ENCODE measurements at regions of chr2 and their contacts with region 1.

Region 1: GRCh38 chr2:12430407-12431133 is 286.2 kb upstream of the TRIB2 start:
- DNase-seq: no peak
- H3K4me3 ChIP-seq: no peak overlapping the region
- H3K27ac ChIP-seq: no peak overlapping the region
- H3K4me1 ChIP-seq: no peaks in the 10 kb centered on the region
- H3K27me3 ChIP-seq: no peaks in the 10 kb centered on the region
- CTCF ChIP-seq: no peak

Region 2: DNA sequence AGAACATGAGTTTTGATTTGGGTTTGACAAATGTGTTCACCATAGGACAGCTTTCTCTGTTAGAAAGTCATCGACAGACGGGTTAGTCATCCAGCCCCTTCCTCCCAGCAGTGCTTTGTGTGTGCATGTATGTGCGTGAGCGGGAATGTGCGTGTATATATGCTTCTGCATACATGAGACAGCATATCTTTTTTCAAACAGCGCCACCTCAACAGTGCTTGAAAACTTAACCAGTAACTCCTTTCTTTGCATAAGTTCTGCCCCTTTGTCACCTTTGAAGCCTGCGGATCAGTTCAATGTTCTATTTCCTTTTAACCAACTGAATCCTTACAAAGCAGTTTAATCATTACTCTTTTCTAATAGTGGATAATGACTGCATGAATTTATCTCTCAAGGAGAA is 332.7 kb before region 1 on chr2:
- CTCF ChIA-PET with region 1: no interaction called
- POLR2A ChIA-PET with region 1: no interaction called
- intact Hi-C with region 1: no loop called
- DNase-seq: no peak
- H3K4me3 ChIP-seq: no peak overlapping the region
- H3K27ac ChIP-seq: no peak overlapping the region
- H3K4me1 ChIP-seq: peaks cover 15% of the 10 kb centered on the region
- H3K27me3 ChIP-seq: no peaks in the 10 kb centered on the region
- CTCF ChIP-seq: no peak

Region 3: DNA sequence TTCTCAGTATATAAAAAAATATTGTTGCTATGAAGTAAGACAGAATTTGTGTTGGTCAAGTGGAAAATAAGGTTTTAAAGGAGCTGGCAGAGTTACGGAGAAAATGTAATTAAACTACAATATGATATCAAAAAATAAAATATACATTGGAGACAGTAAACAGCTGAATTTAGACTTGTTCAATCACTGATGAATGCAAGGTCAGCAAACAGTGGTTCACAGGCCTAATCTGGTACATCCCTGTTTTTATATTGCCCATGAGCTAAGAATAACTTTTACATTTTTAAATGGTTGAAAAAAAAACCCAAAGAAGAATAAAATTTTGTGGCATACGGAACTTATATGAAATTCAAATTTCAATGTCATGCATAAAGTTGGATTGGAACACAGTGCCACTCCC is 155.2 kb after region 1 on chr2:
- CTCF ChIA-PET with region 1: no interaction called
- POLR2A ChIA-PET with region 1: interaction called, 10 read pairs
- intact Hi-C with region 1: no loop called
- DNase-seq: no peak
- H3K4me3 ChIP-seq: no peak overlapping the region
- H3K27ac ChIP-seq: no peak overlapping the region
- H3K4me1 ChIP-seq: peaks cover 24% of the 10 kb centered on the region
- H3K27me3 ChIP-seq: no peaks in the 10 kb centered on the region
- CTCF ChIP-seq: no peak

Region 4: GRCh38 chr2:12702305-12703121 is 271.9 kb after region 1 on chr2:
- CTCF ChIA-PET with region 1: no interaction called
- POLR2A ChIA-PET with region 1: interaction called, 15 read pairs
- intact Hi-C with region 1: no loop called
- DNase-seq: peak; percentile 30 to 89
- H3K4me3 ChIP-seq: no peak overlapping the region
- H3K27ac ChIP-seq: peak overlapping the region; percentile 85
- H3K4me1 ChIP-seq: peaks cover 43% of the 10 kb centered on the region
- H3K27me3 ChIP-seq: no peaks in the 10 kb centered on the region
- CTCF ChIP-seq: no peak

Measured in PC-9 (cell line).